Activated CD8-positive, alpha-beta T cell treated with anti-CD3 and anti-CD28 coated beads for 36 hours (primary cell): ENCODE measurements at regions of chr16 and their contacts with region 1.

Region 1: GRCh38 chr16:66344533-66345145 is 21.9 kb upstream of the CDH5 start:
- DNase-seq: peak; percentile 58
- ATAC-seq: no peak
- H3K4me3 Mint-ChIP-seq: no peak overlapping the region
- H3K27ac Mint-ChIP-seq: no peak overlapping the region
- H3K4me1 Mint-ChIP-seq: no peaks in the 10 kb centered on the region
- H3K27me3 Mint-ChIP-seq: peaks cover 17% of the 10 kb centered on the region
- CTCF ChIP-seq: peak; percentile 84

Region 2: GRCh38 chr16:66332634-66333610 is 11.7 kb before region 1 on chr16:
- CTCF ChIA-PET with region 1: interaction called, 10 read pairs
- POLR2A ChIA-PET with region 1: no interaction called
- intact Hi-C with region 1: no loop called
- DNase-seq: no peak
- ATAC-seq: no peak
- H3K4me3 Mint-ChIP-seq: no peak overlapping the region
- H3K27ac Mint-ChIP-seq: no peak overlapping the region
- H3K4me1 Mint-ChIP-seq: no peaks in the 10 kb centered on the region
- H3K27me3 Mint-ChIP-seq: peaks cover 17% of the 10 kb centered on the region
- CTCF ChIP-seq: no peak

Region 3: DNA sequence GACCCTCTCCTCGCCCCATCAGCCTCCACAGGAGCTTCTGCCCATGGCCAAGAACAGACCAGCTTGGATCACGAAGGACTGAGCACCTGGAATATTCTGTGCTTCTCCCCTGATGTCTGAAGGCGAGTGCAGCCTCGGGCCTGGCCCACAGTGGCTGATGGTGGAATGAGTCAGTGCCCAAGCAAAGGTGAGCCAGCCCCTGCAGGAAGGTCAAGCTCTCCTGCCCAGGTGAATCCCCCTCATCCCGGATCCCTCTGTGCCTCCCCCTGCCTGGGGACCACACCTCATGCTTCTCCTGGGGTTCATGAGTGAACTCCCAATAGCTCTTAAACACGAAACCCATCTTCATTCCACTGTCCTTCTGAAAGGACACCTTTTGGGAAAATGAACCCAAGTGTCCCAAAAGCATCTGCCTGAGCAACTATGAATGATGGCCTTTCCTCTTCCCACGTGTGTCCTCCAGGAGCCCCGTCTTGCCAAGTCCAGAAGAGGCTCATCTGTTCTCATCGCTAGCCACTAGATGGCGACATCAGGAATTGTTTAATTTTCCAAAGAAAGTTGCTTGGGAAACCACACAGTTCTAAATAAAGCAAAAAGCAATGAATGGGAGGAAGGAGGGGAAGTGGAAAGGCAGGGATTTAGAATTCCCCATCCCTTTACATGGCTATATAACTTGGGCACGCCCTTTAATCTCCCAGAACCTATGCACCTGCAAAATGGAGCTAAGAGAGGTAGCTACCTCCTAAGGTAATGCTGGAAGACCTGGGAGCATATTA is 12.7 kb after region 1 on chr16:
- CTCF ChIA-PET with region 1: interaction called, 89 read pairs
- POLR2A ChIA-PET with region 1: no interaction called
- intact Hi-C with region 1: no loop called
- DNase-seq: peak; percentile 37
- ATAC-seq: no peak
- H3K4me3 Mint-ChIP-seq: no peak overlapping the region
- H3K27ac Mint-ChIP-seq: no peak overlapping the region
- H3K4me1 Mint-ChIP-seq: no peaks in the 10 kb centered on the region
- H3K27me3 Mint-ChIP-seq: peaks cover 29% of the 10 kb centered on the region
- CTCF ChIP-seq: peak; percentile 70